Heart left ventricle (tissue), 16 donors: ENCODE measurements at regions of chr13 and their contacts with region 1.

Region 1: DNA sequence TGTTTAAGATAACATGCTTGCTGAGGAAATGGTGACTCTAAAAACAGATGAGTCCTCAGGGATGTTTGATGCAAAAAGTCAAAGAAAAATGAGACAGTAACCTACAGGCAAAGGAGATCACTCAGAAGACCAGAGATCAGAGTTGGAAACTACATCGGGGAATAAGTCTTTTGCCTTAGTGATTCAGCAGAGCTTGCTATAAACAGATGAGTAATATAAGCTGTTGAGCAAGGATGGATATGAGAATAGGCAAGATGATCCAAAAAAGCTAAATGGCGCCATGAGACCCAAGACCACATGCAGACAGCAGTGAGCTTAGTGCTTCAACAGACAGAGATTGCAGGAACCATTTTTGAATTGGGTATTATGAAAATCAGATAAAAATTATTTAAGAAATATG is 168.6 kb downstream of the POSTN start:
- DNase-seq: no peak
- ATAC-seq: no peak
- H3K4me3 ChIP-seq: no peak overlapping the region
- H3K27ac ChIP-seq: no peak overlapping the region
- H3K4me1 ChIP-seq: peaks cover 0 to 12% (median 0%) of the 10 kb centered on the region in 12 donors
- H3K27me3 ChIP-seq: no peaks in the 10 kb centered on the region
- CTCF ChIP-seq: no peak
- POLR2A ChIP-seq: no peak

Region 2: DNA sequence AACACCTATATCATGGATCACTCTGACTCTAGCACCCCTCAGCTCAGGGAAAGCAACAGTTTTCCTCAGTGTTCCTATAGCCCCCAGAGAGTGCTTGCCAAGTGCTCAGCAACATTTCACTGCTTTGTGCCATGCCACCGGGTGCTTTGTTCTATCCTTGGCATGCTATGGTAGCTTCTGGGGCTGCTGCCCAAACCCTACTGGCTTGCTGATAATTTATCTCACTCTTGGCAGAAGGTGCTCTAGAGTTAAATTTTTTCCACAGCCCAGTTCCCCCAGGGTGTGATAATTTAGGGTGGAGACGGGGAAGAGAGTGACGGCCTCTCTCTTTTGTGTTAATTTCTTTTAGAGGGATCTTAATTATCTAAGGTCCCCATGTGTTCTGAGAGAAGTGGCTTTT is 312.0 kb before region 1 on chr13:
- intact Hi-C with region 1: loop called in 1 of 10 experiments (anchors 10 kb)
- DNase-seq: peak; percentile 44 to 73 (median 62)
- ATAC-seq: peak; percentile 96 to 99 (median 98)
- H3K4me3 ChIP-seq: no peak overlapping the region
- H3K27ac ChIP-seq: peak overlapping the region in 6 of 12 donors; percentile 4 to 65 (median 41)
- H3K4me1 ChIP-seq: peaks cover 0 to 18% (median 3%) of the 10 kb centered on the region in 12 donors
- H3K27me3 ChIP-seq: no peaks in the 10 kb centered on the region
- CTCF ChIP-seq: no peak
- POLR2A ChIP-seq: no peak

Region 3: DNA sequence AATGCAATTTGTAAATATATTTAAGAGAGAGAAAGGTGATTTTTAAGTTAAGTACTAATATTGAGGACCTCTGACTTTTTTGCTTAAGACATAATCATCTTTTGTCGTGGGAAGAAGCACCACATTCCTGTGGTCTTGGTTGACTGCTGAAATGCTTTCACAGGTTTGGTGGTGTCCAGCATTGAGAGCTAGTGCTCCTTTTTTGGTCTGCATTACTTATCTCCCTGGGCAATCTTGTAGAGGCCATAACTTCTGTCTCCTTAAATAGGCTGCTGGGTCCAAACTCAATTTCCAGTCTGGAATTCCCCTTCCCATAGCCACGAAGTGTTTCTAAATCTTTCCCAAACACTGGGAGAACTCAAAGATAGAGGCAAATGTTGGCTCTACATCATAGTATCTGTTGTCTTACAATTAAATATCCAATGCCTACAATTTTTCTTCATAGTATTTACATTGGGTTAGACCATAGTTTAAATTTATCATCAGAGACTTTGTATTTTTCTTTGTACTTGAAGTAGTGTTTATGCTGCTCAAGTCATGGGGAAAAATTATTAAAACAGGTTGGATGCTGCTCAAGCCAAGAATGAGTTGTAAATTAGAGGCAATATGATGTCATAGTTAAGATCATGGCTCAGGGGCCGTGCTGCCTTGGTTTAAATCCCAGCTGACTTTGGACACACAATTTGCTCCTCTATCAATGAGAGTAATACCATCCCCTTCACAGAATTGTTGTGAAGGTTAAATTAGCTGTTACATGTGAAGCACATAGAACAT is 63.0 kb after region 1 on chr13:
- intact Hi-C with region 1: no loop called
- DNase-seq: no peak
- ATAC-seq: peak in 1 of 4 donors; percentile 19
- H3K4me3 ChIP-seq: no peak overlapping the region
- H3K27ac ChIP-seq: peak overlapping the region in 4 of 12 donors; percentile 7 to 30 (median 20)
- H3K4me1 ChIP-seq: peaks cover 0 to 37% (median 5%) of the 10 kb centered on the region in 12 donors
- H3K27me3 ChIP-seq: no peaks in the 10 kb centered on the region
- CTCF ChIP-seq: no peak
- POLR2A ChIP-seq: no peak